Transverse colon (tissue), 4 donors: ENCODE measurements at regions of chr12 and their contacts with region 1.

Region 1: DNA sequence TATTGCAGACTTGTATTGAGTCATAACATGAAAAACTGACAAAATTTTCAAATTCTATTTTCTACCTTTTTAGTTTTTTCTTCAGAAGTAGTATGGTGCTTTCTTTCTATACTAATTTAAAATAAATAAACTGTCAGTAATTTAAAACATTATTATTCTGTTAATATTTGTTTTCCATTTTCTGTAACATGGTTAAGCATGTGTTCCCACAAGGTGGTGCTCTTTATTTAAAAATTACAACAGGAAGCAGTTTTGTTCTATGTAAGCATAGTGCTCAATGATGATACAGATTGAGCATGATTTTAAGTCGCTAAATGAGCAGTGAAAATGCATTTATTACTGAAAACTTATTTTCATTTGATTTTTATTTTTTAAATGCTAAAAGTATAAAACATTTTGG is 114.6 kb downstream of the PPFIA2 start:
- DNase-seq: no peak
- H3K4me3 ChIP-seq: no peak overlapping the region
- H3K27ac ChIP-seq: no peak overlapping the region
- H3K4me1 ChIP-seq: no peaks in the 10 kb centered on the region
- H3K27me3 ChIP-seq: no peaks in the 10 kb centered on the region
- CTCF ChIP-seq: peak; percentile 24 to 39 (median 34)
- EP300 ChIP-seq: no peak
- POLR2A ChIP-seq: no peak

Region 2: DNA sequence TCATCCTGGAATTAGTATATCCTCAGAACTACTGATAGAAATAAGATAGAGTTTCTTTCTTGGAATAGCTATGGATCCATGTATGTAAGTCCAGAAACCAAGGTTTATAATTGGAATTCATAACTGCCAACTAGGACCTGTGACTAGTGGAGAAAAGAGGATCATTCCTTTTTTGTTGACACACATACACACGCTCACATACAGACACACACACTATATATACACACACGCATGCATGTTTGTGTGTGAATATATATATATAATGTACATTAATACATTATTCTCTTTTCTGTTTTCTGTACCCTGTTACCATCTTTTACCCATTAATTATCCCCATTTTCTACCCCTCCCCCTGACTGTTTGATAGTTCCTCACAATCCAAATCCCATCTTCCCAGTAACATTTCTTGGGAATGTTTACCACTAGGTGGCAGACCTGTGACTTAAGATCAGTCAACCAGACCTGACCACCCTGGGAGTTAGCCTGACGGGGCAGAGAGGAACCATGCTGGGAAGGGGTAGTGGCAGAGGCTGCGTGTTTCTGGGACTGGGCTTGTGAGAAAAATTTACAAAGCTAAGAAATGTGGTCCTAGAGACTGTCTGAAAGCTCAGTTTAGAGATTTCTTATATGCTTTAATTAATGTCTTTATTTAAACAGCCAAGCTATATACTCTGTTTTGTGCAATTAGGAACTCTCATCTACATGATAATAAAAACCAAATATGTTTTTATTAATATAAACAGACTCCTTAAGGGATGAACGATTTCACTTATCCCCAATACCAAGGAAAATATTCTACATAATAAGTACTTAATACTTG is 193.4 kb before region 1 on chr12:
- in situ Hi-C with region 1: loop called in 1 of 4 experiments (anchors 25 kb)
- intact Hi-C with region 1: no loop called
- DNase-seq: no peak
- H3K4me3 ChIP-seq: no peak overlapping the region
- H3K27ac ChIP-seq: no peak overlapping the region
- H3K4me1 ChIP-seq: no peaks in the 10 kb centered on the region
- H3K27me3 ChIP-seq: no peaks in the 10 kb centered on the region
- CTCF ChIP-seq: peak; percentile 39 to 51 (median 43)
- EP300 ChIP-seq: no peak
- POLR2A ChIP-seq: no peak

Region 3: GRCh38 chr12:82326905-82327503 is 682.5 kb after region 1 on chr12:
- in situ Hi-C with region 1: loop called in 3 of 4 experiments (anchors 25 kb)
- intact Hi-C with region 1: no loop called
- DNase-seq: no peak
- H3K4me3 ChIP-seq: no peak overlapping the region
- H3K27ac ChIP-seq: no peak overlapping the region
- H3K4me1 ChIP-seq: peaks cover 0 to 18% (median 7%) of the 10 kb centered on the region in 4 donors
- H3K27me3 ChIP-seq: no peaks in the 10 kb centered on the region
- CTCF ChIP-seq: peak in 4 of 5 experiments; percentile 26 to 50 (median 42)
- EP300 ChIP-seq: no peak
- POLR2A ChIP-seq: no peak

Region 4: GRCh38 chr12:82358200-82359114 is 714.0 kb after region 1 on chr12 and contains the starts of genes CCDC59 and METTL25:
- in situ Hi-C with region 1: no loop called
- intact Hi-C with region 1: loop called (anchors 10 kb)
- DNase-seq: peak; percentile 99
- H3K4me3 ChIP-seq: peak within 1 kb of the TSS; percentile 71 to 86 (median 82)
- H3K27ac ChIP-seq: peak within 1 kb of the TSS; percentile 88 to 95 (median 89)
- H3K4me1 ChIP-seq: peaks cover 4 to 41% (median 24%) of the 10 kb centered on the region in 4 donors
- H3K27me3 ChIP-seq: no peaks in the 10 kb centered on the region
- CTCF ChIP-seq: peak; percentile 98 to 100 (median 99)
- EP300 ChIP-seq: no peak
- POLR2A ChIP-seq: peak; percentile 90
- total RNA-seq, gene CCDC59: 5.8 to 62.5 (median 35.3) TPM
- total RNA-seq, gene METTL25: 1.5 to 23.2 (median 12.2) TPM